Activated T-helper 2 cell treated with anti-CD3 and anti-CD28 coated beads, Interferon-gamma antibody, Interleukin-2, Interleukin-4, amounts not matched to agents 10 μg/mL and 5 μg/mL and 100 μg/mL, durations not matched to agents 14 hours and 24 hours and 36 hours (primary cell): ENCODE measurements at regions of chr20 and their contacts with region 1.

Region 1: DNA sequence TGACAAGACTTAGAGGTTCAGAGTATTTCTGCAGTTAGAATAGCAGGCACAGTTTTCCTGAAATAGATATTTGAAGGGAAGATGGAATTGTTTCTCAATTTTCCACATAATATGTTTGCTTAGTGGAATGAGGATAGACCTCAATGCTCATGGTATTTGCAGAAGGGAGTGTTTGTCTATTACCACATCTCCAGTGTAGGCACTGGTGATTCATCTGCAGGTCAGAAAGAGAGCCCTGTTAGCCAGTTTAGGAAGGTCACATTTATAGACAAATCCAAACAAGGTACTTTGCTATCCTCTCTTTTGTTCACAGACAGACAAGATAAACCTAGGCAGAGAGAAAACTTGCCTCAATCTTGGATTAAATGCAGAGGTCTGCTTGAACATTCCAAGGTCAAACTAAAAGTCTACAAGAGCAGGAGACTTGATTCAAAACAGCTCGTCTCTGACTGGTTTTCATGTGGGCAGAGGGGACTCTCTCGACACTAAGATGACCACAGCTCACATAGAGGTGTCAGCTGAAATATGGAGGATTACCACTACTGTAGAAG is 22.8 kb downstream of the ISM1 start:
- DNase-seq: no peak
- H3K4me3 Mint-ChIP-seq: no peak overlapping the region
- H3K27ac Mint-ChIP-seq: no peak overlapping the region
- H3K4me1 Mint-ChIP-seq: peaks cover 36% of the 10 kb centered on the region
- H3K27me3 Mint-ChIP-seq: no peaks in the 10 kb centered on the region

Region 2: GRCh38 chr20:12989586-12990115 is 254.2 kb before region 1 on chr20:
- intact Hi-C with region 1: no loop called
- DNase-seq: no peak
- H3K4me3 Mint-ChIP-seq: no peak overlapping the region
- H3K27ac Mint-ChIP-seq: no peak overlapping the region
- H3K4me1 Mint-ChIP-seq: no peaks in the 10 kb centered on the region
- H3K27me3 Mint-ChIP-seq: no peaks in the 10 kb centered on the region

Region 3: DNA sequence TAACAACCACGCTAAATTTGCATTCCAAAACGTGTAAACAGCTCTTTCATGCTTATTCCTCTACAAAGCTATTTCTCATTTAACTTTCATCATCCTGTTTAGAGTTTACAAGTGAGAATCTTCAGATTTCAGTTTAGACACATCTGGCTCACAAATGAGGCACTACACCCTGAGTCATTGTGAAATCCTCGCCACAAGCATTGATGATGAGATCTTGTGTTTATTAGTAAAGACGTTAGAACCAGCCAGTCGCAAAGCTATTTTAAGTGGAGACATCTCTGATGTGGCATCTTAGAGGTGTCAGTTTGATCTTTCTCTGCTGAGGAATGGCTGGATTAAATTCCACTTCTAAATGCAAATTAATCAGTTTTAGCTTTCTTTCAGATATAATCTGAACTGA is 31.2 kb before region 1 on chr20:
- intact Hi-C with region 1: loop called (anchors 1 kb)
- DNase-seq: peak; percentile 26
- H3K4me3 Mint-ChIP-seq: no peak overlapping the region
- H3K27ac Mint-ChIP-seq: peak overlapping the region; percentile 29
- H3K4me1 Mint-ChIP-seq: peaks cover 30% of the 10 kb centered on the region
- H3K27me3 Mint-ChIP-seq: peaks cover 37% of the 10 kb centered on the region

Region 4: GRCh38 chr20:13341781-13342277 is 97.9 kb after region 1 on chr20:
- intact Hi-C with region 1: loop called (anchors 2 kb)
- DNase-seq: no peak
- H3K4me3 Mint-ChIP-seq: no peak overlapping the region
- H3K27ac Mint-ChIP-seq: peak overlapping the region; percentile 36
- H3K4me1 Mint-ChIP-seq: peaks cover 42% of the 10 kb centered on the region
- H3K27me3 Mint-ChIP-seq: no peaks in the 10 kb centered on the region